ENCODE measurements at regions of chr1 and their contacts with region 1.

Region 1: GRCh38 chr1:222455188-222455879 is 92.6 kb downstream of the HHIPL2 start:
- DNase-seq: peak; percentile 62 to 90 (median 81)
- ATAC-seq: peak; percentile 99 to 100
- H3K4me3 Mint-ChIP-seq: peak overlapping the region in 8 of 10 donors; percentile 4 to 63 (median 18)
- H3K27ac Mint-ChIP-seq: peak overlapping the region in 8 of 10 donors; percentile 15 to 86 (median 22)
- H3K4me1 Mint-ChIP-seq: peaks cover 11 to 22% (median 14%) of the 10 kb centered on the region in 4 donors
- H3K27me3 Mint-ChIP-seq: peaks cover 0 to 9% (median 1%) of the 10 kb centered on the region in 5 donors

Region 2: DNA sequence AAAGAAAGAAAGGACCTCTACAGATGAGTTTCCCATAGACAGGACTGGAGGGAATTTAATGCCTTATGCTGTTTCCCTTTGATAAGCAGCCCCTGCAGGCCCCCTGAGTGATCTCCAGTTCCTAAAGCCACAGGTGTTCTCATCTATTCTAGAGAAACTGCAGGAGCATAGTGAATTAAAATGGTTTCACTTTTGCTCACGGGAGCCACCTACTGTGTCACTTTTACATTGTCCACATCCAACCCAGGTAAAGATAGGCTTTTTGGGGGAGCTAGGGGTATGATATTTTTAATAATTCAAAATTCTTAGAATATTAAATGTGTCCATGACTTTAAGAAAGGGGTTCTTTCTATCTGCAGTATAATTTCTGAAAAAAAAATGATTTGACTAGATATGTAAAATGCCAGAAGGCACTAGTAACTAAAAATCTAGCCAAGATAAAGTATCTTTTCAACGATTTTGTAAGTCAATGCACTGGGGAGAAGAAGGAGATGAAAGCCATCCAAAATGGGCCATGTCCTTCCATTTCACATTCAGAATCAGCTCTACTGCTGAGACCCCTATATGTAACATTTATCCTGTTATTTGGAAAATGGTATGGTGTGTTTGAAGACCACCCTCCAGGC is 446.1 kb before region 1 on chr1:
- POLR2A ChIA-PET with region 1: no interaction called
- DNase-seq: peak in 6 of 10 donors; percentile 7 to 64 (median 31)
- ATAC-seq: peak; percentile 54 to 62
- H3K4me3 Mint-ChIP-seq: peak overlapping the region in 5 of 10 donors; percentile 32 to 58 (median 50)
- H3K27ac Mint-ChIP-seq: peak overlapping the region in 1 of 10 donors; percentile 51
- H3K4me1 Mint-ChIP-seq: peaks cover 0 to 2% (median 1%) of the 10 kb centered on the region in 4 donors
- H3K27me3 Mint-ChIP-seq: peaks cover 0 to 8% (median 1%) of the 10 kb centered on the region in 5 donors

Region 3: GRCh38 chr1:222250376-222250775 is 205.0 kb before region 1 on chr1:
- POLR2A ChIA-PET with region 1: no interaction called
- DNase-seq: no peak
- ATAC-seq: no peak
- H3K4me3 Mint-ChIP-seq: no peak overlapping the region
- H3K27ac Mint-ChIP-seq: no peak overlapping the region
- H3K4me1 Mint-ChIP-seq: peaks cover 2 to 6% (median 3%) of the 10 kb centered on the region in 4 donors
- H3K27me3 Mint-ChIP-seq: no peaks in the 10 kb centered on the region

Region 4: GRCh38 chr1:222370081-222370912 is 85.0 kb before region 1 on chr1:
- POLR2A ChIA-PET with region 1: no interaction called
- DNase-seq: no peak
- ATAC-seq: no peak
- H3K4me3 Mint-ChIP-seq: no peak overlapping the region
- H3K27ac Mint-ChIP-seq: peak overlapping the region in 3 of 10 donors; percentile 18 to 54 (median 45)
- H3K4me1 Mint-ChIP-seq: peaks cover 0 to 5% (median under 1%) of the 10 kb centered on the region in 4 donors
- H3K27me3 Mint-ChIP-seq: no peaks in the 10 kb centered on the region

Region 5: DNA sequence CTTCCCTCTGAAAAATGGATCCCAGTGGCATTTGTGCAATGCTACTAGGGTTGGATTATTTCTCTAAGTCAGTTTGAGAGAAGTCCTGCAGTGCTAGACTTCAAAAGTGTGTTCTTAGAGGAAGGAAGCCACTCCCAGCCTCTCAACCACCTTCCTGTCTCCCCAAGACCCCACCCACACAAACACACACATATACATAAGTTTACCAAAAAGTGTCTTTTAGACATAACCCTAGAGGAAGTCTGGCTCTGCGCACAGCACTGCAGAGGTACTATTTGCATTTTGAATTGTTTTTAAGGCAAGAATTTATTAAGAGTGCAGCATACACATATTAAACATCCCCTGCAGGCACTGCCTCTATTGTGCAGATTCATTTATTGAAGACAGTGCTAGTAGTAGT is 34.7 kb before region 1 on chr1:
- POLR2A ChIA-PET with region 1: interaction called, 10 read pairs
- DNase-seq: peak in 8 of 10 donors; percentile 6 to 78 (median 48)
- ATAC-seq: peak; percentile 98 to 99
- H3K4me3 Mint-ChIP-seq: peak overlapping the region; percentile 46 to 79 (median 72)
- H3K27ac Mint-ChIP-seq: peak overlapping the region; percentile 35 to 95 (median 92)
- H3K4me1 Mint-ChIP-seq: peaks cover 34 to 74% (median 65%) of the 10 kb centered on the region in 4 donors
- H3K27me3 Mint-ChIP-seq: no peaks in the 10 kb centered on the region

Region 6: DNA sequence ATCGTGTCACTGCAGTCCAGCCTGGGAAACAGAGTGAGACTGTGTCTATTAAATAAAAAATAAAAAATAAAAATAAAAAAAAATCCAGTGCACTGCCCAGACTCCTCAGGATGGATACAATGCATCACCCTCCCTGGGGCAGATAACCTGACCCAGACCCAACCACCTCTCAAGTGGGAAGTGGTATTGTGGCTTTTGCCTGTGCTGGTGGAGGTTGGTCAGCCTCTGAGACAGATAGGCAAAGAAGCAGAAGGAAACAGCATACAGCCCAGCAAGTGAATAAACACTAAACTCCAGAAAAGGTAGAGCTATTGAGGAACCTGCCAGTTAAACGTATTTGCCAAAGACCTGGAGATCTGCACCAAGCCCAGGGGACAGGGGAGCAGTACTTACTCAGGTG is 70.6 kb after region 1 on chr1:
- POLR2A ChIA-PET with region 1: no interaction called
- DNase-seq: no peak
- ATAC-seq: no peak
- H3K4me3 Mint-ChIP-seq: no peak overlapping the region
- H3K27ac Mint-ChIP-seq: no peak overlapping the region
- H3K4me1 Mint-ChIP-seq: no peaks in the 10 kb centered on the region
- H3K27me3 Mint-ChIP-seq: peaks cover 0 to 15% (median 9%) of the 10 kb centered on the region in 5 donors